AG04450 (cell line): ENCODE measurements at regions of chr10 and their contacts with region 1.

Region 1: DNA sequence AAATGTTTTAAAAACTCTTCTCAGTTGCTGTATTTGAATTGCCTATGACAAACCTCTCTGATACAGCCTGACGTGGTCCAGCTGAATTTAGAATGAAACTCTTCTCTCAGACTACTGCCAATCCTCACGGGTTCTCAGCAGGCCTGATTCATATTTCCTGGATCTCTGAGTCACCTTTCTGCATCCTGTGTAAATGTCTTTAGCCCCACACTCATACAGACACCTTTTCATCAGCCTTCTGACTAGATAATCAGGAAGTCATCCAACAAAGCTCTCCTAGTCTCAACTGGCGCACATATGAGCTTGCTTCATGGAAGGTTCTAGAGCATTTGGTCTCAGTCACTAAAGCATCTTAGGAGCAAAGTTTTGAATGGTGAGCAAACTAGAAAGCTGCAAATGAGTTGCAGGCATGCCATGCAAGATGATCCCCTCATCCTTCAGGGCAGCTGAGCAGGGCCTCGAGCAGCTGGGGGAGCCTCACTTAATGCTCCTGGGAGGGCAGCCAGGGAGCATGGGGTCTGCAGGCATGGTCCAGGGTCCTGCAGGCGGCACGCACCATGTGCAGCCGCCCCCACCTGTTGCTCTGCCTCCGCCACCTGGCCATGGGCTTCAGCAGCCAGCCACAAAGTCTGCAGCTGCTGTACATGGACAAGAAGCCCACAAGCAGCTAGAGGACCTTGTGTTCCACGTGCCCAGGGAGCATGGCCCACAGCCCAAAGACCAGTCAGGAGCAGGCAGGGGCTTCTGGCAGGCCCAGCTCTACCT is 182.8 kb downstream of the ARHGAP12 start:
- DNase-seq: peak; percentile 71
- H3K4me3 ChIP-seq: no peak overlapping the region
- H3K27ac ChIP-seq: peak overlapping the region; percentile 75
- H3K27me3 ChIP-seq: no peaks in the 10 kb centered on the region
- CTCF ChIP-seq: no peak

Region 2: DNA sequence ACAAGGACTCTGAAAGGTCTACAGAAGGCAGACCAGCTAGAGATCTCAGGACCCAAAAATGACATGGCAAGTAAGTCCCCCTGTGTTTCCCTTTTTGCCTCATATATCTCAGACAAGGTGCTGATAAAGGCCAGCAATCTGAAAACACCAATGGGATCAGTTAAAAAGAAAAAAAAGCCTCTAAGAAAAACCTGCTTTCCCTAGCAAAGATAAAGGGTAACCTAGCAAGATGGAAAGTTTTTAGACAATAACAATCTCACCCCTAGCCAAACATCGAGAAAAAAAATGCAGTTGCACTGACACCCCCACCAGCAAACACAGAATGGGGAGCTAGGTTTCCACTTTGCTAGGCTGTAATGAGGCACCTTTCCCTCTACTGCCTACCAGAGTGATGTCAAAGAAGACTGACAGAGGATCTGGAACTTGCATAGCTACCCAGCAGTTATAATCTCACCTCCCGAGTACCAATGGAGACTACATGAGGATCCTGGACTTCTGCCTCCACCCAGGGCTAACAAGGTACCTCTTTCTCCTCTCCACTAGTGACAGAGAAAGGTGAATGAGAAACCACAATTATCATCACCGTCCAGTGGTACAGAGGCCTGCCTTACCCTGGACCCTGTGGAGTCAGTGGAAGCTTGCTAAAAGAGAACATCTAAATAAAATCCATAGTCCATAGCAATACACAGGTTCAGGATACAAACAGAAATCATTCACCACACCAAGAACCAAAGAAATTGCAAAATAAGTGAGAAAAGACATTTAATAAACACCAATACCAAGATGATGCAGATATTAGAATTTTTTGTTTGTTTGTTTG is 57.9 kb before region 1 on chr10:
- CTCF ChIA-PET with region 1: no interaction called
- POLR2A ChIA-PET with region 1: no interaction called
- DNase-seq: no peak
- H3K4me3 ChIP-seq: no peak overlapping the region
- H3K27ac ChIP-seq: no peak overlapping the region
- H3K27me3 ChIP-seq: no peaks in the 10 kb centered on the region
- CTCF ChIP-seq: no peak

Region 3: GRCh38 chr10:31774299-31774900 is 28.6 kb after region 1 on chr10:
- CTCF ChIA-PET with region 1: interaction called, 10 read pairs
- POLR2A ChIA-PET with region 1: no interaction called
- DNase-seq: no peak
- H3K4me3 ChIP-seq: no peak overlapping the region
- H3K27ac ChIP-seq: peak overlapping the region; percentile 47
- H3K27me3 ChIP-seq: no peaks in the 10 kb centered on the region
- CTCF ChIP-seq: no peak

Region 4: DNA sequence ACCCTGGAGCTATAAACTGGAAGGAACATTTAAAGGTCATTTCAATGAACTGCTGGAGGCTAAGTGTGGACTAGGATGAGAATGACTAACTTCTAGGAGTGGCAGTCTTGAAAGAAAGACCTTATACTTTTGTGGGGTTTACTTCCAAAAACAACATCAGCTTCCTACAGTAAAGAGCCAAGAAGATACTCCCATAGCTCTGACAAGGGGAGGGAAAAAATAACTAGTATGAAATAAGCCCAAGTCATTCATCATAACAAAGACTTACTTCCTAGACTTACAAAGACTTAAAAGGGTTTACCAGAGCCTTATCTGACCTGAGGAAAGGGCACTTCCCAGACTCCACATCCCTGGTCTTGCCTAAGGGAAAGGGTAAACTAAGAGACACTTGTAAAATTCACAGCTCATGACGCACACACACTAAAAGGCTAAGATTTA is 151.2 kb after region 1 on chr10:
- CTCF ChIA-PET with region 1: no interaction called
- POLR2A ChIA-PET with region 1: no interaction called
- DNase-seq: no peak
- H3K4me3 ChIP-seq: no peak overlapping the region
- H3K27ac ChIP-seq: no peak overlapping the region
- H3K27me3 ChIP-seq: no peaks in the 10 kb centered on the region
- CTCF ChIP-seq: no peak